ENCODE measurements at regions of chr12 and their contacts with region 1.

Region 1: GRCh38 chr12:103805961-103806360 is 35.1 kb downstream of the NT5DC3 start:
- DNase-seq: no peak
- H3K4me3 ChIP-seq: no peak overlapping the region
- H3K27ac ChIP-seq: peak overlapping the region; percentile 43 to 76
- H3K4me1 ChIP-seq: peaks cover 0 to 92% (median 65%) of the 10 kb centered on the region in 4 donors
- H3K27me3 ChIP-seq: no peaks in the 10 kb centered on the region
- CTCF ChIP-seq: no peak

Region 2: DNA sequence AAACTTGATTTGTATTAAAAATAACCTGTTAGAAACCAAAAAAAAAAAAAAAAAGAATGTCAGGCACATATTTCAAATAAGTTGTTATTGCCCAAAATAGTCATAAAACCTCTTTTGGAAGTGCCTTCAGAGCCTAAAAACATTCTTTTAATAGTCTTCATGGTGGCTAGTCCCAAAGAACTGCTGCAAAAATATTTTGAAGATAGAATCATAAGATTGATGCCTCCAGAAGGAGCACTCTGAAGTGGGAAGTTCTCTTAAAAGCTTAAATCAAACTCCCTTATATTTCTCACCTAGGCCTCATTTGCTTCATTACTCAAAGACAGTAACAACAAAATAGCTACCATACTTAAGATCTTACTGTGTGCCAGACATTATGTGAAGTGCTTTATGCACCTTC is 62.3 kb after region 1 on chr12:
- intact Hi-C with region 1: loop called (anchors 2 kb)
- DNase-seq: no peak
- H3K4me3 ChIP-seq: no peak overlapping the region
- H3K27ac ChIP-seq: peak overlapping the region; percentile 56 to 74
- H3K4me1 ChIP-seq: peaks cover 0 to 58% (median 8%) of the 10 kb centered on the region in 4 donors
- H3K27me3 ChIP-seq: no peaks in the 10 kb centered on the region
- CTCF ChIP-seq: no peak